Activated CD4-positive, alpha-beta memory T cell treated with anti-CD3 and anti-CD28 coated beads for 36 hours (primary cell): ENCODE measurements at regions of chr6 and their contacts with region 1.

Region 1: DNA sequence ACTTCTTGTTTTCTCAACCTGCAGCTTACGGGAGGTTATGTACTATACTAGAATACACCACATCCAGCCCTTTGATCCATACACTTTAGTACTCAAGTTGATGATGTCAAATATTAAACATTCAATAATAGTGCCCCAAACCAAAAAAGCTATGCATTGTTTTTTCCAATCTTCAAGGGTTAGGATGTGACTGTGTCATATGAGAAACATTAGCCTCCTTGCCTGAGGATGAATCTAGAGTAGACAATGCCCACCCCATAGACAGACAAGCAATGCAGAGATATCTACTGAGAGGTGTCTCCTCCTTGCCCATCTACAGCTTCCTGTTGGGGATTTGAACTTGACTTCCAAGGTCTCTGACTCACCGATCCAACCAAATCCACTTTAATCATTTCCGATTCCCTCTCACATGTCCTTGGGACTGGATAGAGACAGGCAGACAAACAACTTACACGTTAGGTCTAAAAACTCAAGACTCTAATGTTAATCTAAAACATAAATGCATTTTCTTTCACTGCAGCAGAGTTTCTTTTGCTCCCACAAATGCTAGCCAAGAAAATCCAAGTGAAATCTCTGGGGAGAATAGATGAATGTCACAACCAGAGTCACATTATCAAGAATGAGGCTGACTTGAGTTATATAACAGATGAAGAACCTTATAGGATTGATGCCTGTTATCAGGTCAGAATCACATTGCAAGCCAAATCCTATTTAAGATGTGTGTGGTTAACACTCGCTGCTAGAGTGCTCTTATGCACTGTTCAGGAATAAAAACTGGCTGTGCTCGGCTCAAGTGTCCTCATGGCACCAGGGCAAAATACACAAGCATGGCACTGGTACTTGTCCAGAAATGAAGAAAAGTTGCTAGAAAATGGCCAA is 75.5 kb upstream of the TNFAIP3 start:
- DNase-seq: no peak
- H3K4me3 Mint-ChIP-seq: peak overlapping the region; percentile 62
- H3K27ac Mint-ChIP-seq: peak overlapping the region; percentile 59
- H3K4me1 Mint-ChIP-seq: peaks cover 53% of the 10 kb centered on the region
- H3K27me3 Mint-ChIP-seq: no peaks in the 10 kb centered on the region

Region 2: GRCh38 chr6:137811121-137811915 is 19.8 kb after region 1 on chr6:
- CTCF ChIA-PET with region 1: interaction called, 4 read pairs
- POLR2A ChIA-PET with region 1: no interaction called
- intact Hi-C with region 1: loop called (anchors 1 kb)
- DNase-seq: peak; percentile 90
- H3K4me3 Mint-ChIP-seq: peak overlapping the region; percentile 36
- H3K27ac Mint-ChIP-seq: peak overlapping the region; percentile 91
- H3K4me1 Mint-ChIP-seq: peaks cover 66% of the 10 kb centered on the region
- H3K27me3 Mint-ChIP-seq: no peaks in the 10 kb centered on the region